WTC11 (cell line): ENCODE measurements at regions of chr22 and their contacts with region 1.

Region 1: GRCh38 chr22:37933711-37934376 is 19.6 kb downstream of the C22orf23 start:
- DNase-seq: peak; percentile 97
- ATAC-seq: peak; percentile 97
- H3K4me3 Mint-ChIP-seq: no peak overlapping the region
- H3K27ac Mint-ChIP-seq: peak overlapping the region; percentile 72
- H3K4me1 Mint-ChIP-seq: peaks cover 3% of the 10 kb centered on the region
- H3K27me3 Mint-ChIP-seq: no peaks in the 10 kb centered on the region; the same call in 1 of the 2 replicates
- CTCF ChIP-seq: peak; percentile 77

Region 2: GRCh38 chr22:37716708-37717107 is 217.1 kb before region 1 on chr22:
- CTCF ChIA-PET with region 1: no interaction called
- POLR2A ChIA-PET with region 1: no interaction called
- DNase-seq: no peak
- ATAC-seq: no peak
- H3K4me3 Mint-ChIP-seq: no peak overlapping the region
- H3K27ac Mint-ChIP-seq: peak overlapping the region; percentile 73; the same call in 1 of the 2 replicates
- H3K4me1 Mint-ChIP-seq: no peaks in the 10 kb centered on the region
- H3K27me3 Mint-ChIP-seq: peaks cover 3% of the 10 kb centered on the region; the same call in 1 of the 2 replicates
- CTCF ChIP-seq: no peak

Region 3: GRCh38 chr22:37887610-37888378 is 46.0 kb before region 1 on chr22:
- CTCF ChIA-PET with region 1: interaction called, 18 read pairs
- POLR2A ChIA-PET with region 1: no interaction called
- DNase-seq: no peak
- ATAC-seq: peak; percentile 84
- H3K4me3 Mint-ChIP-seq: no peak overlapping the region
- H3K27ac Mint-ChIP-seq: peak overlapping the region; percentile 28; the same call in 1 of the 2 replicates
- H3K4me1 Mint-ChIP-seq: peaks cover under 1% of the 10 kb centered on the region
- H3K27me3 Mint-ChIP-seq: no peaks in the 10 kb centered on the region
- CTCF ChIP-seq: no peak

Region 4: DNA sequence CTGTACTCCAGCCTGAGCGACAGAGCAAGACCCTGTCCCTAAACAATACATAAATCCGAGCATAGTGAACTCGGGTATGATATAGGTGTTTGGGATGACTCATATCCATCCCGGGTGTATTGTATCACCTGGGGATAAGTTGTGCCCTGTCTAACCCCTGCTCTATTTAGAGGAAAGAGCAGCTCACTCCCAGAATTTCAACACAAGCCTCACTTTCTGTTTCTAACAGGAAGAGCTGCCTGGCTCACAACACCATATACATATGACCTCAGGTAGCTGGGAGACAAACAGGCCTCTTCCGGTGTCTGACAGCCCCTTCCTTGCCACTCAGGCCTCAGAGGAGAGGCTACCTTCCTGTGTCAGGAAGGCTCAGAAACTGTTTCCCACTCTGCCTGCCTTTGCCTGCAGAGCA is 37.7 kb before region 1 on chr22:
- CTCF ChIA-PET with region 1: interaction called, 47 read pairs
- POLR2A ChIA-PET with region 1: no interaction called
- DNase-seq: no peak
- ATAC-seq: no peak
- H3K4me3 Mint-ChIP-seq: no peak overlapping the region
- H3K27ac Mint-ChIP-seq: peak overlapping the region; percentile 94
- H3K4me1 Mint-ChIP-seq: peaks cover 51% of the 10 kb centered on the region
- H3K27me3 Mint-ChIP-seq: no peaks in the 10 kb centered on the region
- CTCF ChIP-seq: no peak

Region 5: GRCh38 chr22:37905534-37906363 is 28.1 kb before region 1 on chr22 and contains the start of gene MICALL1:
- CTCF ChIA-PET with region 1: interaction called, 13 read pairs
- POLR2A ChIA-PET with region 1: no interaction called
- DNase-seq: peak; percentile 68
- ATAC-seq: peak; percentile 78
- H3K4me3 Mint-ChIP-seq: peak within 1 kb of the TSS; percentile 76
- H3K27ac Mint-ChIP-seq: no peak within 1 kb of the TSS; the same call in 1 of the 2 replicates
- H3K4me1 Mint-ChIP-seq: peaks cover 34% of the 10 kb centered on the region
- H3K27me3 Mint-ChIP-seq: no peaks in the 10 kb centered on the region
- CTCF ChIP-seq: no peak
- total RNA-seq, gene MICALL1: 34.1 to 47.2 TPM (median 38.6 TPM) in 3 replicates

Region 6: GRCh38 chr22:37953437-37954179 is 19.8 kb after region 1 on chr22 and contains the starts of genes C22orf23 and POLR2F:
- CTCF ChIA-PET with region 1: interaction called, 23 read pairs
- POLR2A ChIA-PET with region 1: interaction called, 4 read pairs
- DNase-seq: peak; percentile 96
- ATAC-seq: peak; percentile 86
- H3K4me3 Mint-ChIP-seq: peak within 1 kb of the TSS; percentile 95
- H3K27ac Mint-ChIP-seq: peak within 1 kb of the TSS; percentile 95
- H3K4me1 Mint-ChIP-seq: peaks cover 24% of the 10 kb centered on the region
- H3K27me3 Mint-ChIP-seq: peaks cover 16% of the 10 kb centered on the region
- CTCF ChIP-seq: no peak
- total RNA-seq, gene C22orf23: 0.16 to 0.96 TPM (median 0.72 TPM) in 3 replicates
- total RNA-seq, gene POLR2F: 128 to 138 TPM (median 132 TPM) in 3 replicates

Region 7: DNA sequence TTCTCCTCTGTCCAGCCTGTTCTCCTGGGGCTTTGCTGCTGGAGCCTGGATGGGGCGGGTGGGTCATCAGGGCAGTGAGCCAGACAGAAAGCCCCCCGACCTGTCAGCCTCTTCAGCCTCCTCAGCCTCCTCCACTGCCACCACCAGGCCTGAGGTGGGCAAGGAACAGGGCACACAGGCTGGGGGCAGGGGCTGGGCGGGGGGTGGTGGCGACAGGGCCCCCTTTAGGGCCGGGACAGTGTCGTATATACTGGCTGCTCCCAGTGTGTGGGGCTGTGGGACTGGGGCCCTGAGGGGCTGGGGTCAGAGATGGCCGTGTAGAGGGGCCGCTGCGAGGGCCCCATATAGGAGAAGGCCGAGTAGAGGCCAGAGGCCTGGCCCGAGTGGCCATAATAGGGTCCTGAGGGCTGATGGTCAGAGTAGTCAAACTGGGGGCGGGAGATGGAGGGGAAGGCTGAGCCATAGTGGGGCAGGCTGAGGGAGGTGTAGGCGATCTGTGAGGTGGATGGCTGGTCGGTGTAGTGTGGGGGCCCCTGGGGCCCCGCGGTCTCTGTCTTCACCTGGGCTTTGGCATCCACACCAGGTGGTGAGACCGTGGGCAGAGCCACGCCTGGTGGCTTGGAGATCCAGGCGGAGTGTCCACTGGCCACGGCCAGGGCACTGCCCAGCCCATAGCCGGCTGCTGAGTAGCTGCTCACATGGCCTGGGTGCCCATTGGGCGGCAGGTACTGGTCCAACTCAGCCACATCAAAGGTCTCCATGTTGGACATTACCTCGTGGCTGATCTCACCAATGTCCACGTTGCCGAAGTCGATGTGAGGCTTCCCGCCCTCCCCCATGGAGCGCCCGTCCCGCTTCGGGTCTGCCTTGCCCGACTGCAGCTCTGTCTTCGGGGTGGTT is 39.7 kb after region 1 on chr22:
- CTCF ChIA-PET with region 1: no interaction called
- POLR2A ChIA-PET with region 1: no interaction called
- DNase-seq: no peak
- ATAC-seq: no peak
- H3K4me3 Mint-ChIP-seq: no peak overlapping the region
- H3K27ac Mint-ChIP-seq: no peak overlapping the region
- H3K4me1 Mint-ChIP-seq: peaks cover 22% of the 10 kb centered on the region
- H3K27me3 Mint-ChIP-seq: no peaks in the 10 kb centered on the region
- CTCF ChIP-seq: no peak

Region 8: DNA sequence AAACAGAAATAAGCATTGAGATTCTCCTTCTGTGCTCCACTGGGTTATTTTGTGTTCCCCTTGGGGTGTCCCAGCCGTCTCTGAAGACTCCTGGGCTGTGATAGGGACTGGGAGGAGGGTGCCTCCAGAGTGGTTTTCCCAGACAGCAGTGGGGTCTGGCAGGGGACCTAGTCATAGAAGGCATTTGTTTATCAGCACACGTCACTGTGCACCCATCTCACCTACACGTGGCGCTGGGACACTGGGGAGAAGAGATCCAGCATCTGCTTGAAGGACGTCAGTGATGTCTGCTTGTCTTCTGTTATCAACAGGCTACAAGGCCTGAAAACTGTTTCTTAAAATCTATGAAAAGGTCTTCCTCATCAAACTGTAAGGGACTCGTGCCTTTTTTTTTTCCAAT is 89.2 kb after region 1 on chr22:
- CTCF ChIA-PET with region 1: no interaction called
- POLR2A ChIA-PET with region 1: no interaction called
- DNase-seq: no peak
- ATAC-seq: no peak
- H3K4me3 Mint-ChIP-seq: no peak overlapping the region
- H3K27ac Mint-ChIP-seq: no peak overlapping the region
- H3K4me1 Mint-ChIP-seq: 0 out of 2 replicates have a peak, but pooled peaks cover 4% of the 10 kb centered on the region
- H3K27me3 Mint-ChIP-seq: peaks cover 7% of the 10 kb centered on the region
- CTCF ChIP-seq: no peak

Region 9: GRCh38 chr22:38069372-38070249 is 135.8 kb after region 1 on chr22:
- CTCF ChIA-PET with region 1: no interaction called
- POLR2A ChIA-PET with region 1: no interaction called
- DNase-seq: peak; percentile 58
- ATAC-seq: peak; percentile 66
- H3K4me3 Mint-ChIP-seq: no peak overlapping the region
- H3K27ac Mint-ChIP-seq: peak overlapping the region; percentile 45; the same call in 1 of the 2 replicates
- H3K4me1 Mint-ChIP-seq: peaks cover 2% of the 10 kb centered on the region; the same call in 1 of the 2 replicates
- H3K27me3 Mint-ChIP-seq: no peaks in the 10 kb centered on the region
- CTCF ChIP-seq: peak; percentile 25; the same call in 1 of the 2 replicates